ENCODE measurements at regions of chr7 and their contacts with region 1.

Region 1: GRCh38 chr7:143305423-143306070 is 10.4 kb upstream of the CLCN1 start:
- DNase-seq: peak; percentile 57
- H3K4me3 ChIP-seq: no peak overlapping the region
- H3K27ac ChIP-seq: no peak overlapping the region
- H3K4me1 ChIP-seq: no peaks in the 10 kb centered on the region
- H3K27me3 ChIP-seq: no peaks in the 10 kb centered on the region
- CTCF ChIP-seq: peak; percentile 72 to 86
- POLR2A ChIP-seq: no peak

Region 2: DNA sequence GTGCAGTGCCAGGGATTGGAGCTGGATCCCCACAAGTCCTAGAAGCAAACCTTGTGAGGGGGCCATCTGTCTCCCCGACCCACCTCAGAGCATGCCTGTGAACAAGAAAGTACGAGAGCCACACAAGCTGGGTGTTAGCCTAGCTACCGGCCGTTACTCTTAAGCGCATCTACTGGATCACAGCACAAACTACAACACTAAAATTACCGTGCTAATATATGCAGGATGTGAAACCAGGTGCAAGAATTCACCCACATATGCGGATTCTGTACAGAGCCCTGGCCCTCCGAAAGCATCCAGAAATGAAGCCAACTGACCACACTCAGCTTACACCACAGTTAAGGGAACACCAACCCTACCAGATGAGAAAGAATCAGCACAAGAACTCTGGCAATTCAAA is 572.3 kb before region 1 on chr7:
- CTCF ChIA-PET with region 1: no interaction called
- POLR2A ChIA-PET with region 1: no interaction called
- dilution Hi-C with region 1: no loop called
- intact Hi-C with region 1: no loop called
- DNase-seq: no peak
- H3K4me3 ChIP-seq: no peak overlapping the region
- H3K27ac ChIP-seq: no peak overlapping the region
- H3K4me1 ChIP-seq: no peaks in the 10 kb centered on the region
- H3K27me3 ChIP-seq: peaks cover 8 to 20% of the 10 kb centered on the region in 2 experiments
- CTCF ChIP-seq: no peak
- POLR2A ChIP-seq: no peak

Region 3: GRCh38 chr7:143362131-143363015 is 56.8 kb after region 1 on chr7 and contains the start of gene FAM131B:
- CTCF ChIA-PET with region 1: interaction called, 4 read pairs
- POLR2A ChIA-PET with region 1: no interaction called
- dilution Hi-C with region 1: no loop called
- intact Hi-C with region 1: loop called (anchors 5 kb)
- DNase-seq: no peak
- H3K4me3 ChIP-seq: peak within 1 kb of the TSS; percentile 43 to 51 (median 45)
- H3K27ac ChIP-seq: no peak within 1 kb of the TSS
- H3K4me1 ChIP-seq: no peaks in the 10 kb centered on the region
- H3K27me3 ChIP-seq: peaks cover 26 to 42% of the 10 kb centered on the region in 2 experiments
- CTCF ChIP-seq: no peak
- POLR2A ChIP-seq: no peak
- total RNA-seq, gene FAM131B: 1.4 and 1.6 TPM in 2 replicates

Region 4: DNA sequence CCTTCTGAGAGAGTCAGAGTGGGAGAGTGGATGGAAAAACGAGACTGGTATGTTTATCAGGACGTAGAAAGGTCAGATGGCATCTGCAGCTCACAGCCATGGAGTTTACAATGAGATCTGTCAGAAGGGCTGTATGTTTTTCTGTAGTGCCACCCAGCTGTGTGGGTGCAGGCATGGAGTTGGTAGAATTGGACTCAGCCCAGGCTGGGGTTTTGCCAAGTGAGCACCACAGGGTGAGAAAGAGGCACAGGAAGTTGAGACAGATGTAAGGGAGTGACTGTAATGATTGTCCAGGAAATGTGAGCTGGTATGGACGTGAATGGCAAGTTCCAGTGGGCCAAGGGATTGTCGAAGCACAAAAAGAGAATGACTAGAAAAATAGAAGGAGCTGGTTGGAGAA is 66.5 kb after region 1 on chr7:
- CTCF ChIA-PET with region 1: interaction called, 10 read pairs
- POLR2A ChIA-PET with region 1: interaction called, 3 read pairs
- dilution Hi-C with region 1: no loop called
- intact Hi-C with region 1: loop called (anchors 2 kb)
- DNase-seq: peak; percentile 87
- H3K4me3 ChIP-seq: no peak overlapping the region
- H3K27ac ChIP-seq: no peak overlapping the region
- H3K4me1 ChIP-seq: peaks cover 28% of the 10 kb centered on the region
- H3K27me3 ChIP-seq: no peaks in the 10 kb centered on the region
- CTCF ChIP-seq: peak in 1 of 2 donors; percentile 16
- POLR2A ChIP-seq: no peak

Region 5: DNA sequence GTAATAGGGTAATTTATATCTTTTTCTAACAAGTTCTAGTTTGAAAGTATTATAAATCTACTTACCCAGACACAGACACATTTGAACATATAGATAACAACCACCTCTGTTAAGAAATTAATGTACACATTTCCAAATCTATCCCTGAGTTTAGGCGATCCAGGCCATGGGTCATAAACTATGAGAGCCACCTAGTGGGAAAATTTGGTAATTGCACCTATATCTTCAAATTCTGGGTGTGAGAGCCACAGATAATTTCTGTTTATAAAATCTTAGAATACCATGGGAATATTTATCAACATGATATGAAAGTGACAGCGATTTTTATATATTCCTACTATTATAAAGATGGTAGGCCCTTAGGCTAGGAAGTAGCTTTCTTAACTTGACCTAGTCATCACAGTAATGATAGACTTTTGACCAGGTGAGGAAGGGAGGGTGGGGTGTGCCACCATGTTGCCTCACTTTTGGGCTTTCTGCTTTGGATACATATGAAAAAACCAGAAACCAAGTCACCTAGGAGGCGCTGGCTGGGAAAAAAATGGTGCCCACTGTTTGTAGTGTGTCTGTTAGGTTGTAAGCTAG is 111.1 kb after region 1 on chr7:
- CTCF ChIA-PET with region 1: no interaction called
- POLR2A ChIA-PET with region 1: no interaction called
- dilution Hi-C with region 1: no loop called
- intact Hi-C with region 1: loop called (anchors 2 kb)
- DNase-seq: peak; percentile 56
- H3K4me3 ChIP-seq: no peak overlapping the region
- H3K27ac ChIP-seq: no peak overlapping the region
- H3K4me1 ChIP-seq: peaks cover 9% of the 10 kb centered on the region
- H3K27me3 ChIP-seq: no peaks in the 10 kb centered on the region
- CTCF ChIP-seq: peak; percentile 41 to 59
- POLR2A ChIP-seq: no peak

Measured in endothelial cell of umbilical vein (primary cell).